ENCODE measurements at regions of chr18 and their contacts with region 1.

Region 1: GRCh38 chr18:72762515-72763122 is 105.2 kb downstream of the NETO1 start:
- DNase-seq: peak; percentile 30
- ATAC-seq: no peak
- H3K4me3 ChIP-seq: no peak overlapping the region
- H3K27ac ChIP-seq: no peak overlapping the region
- H3K4me1 ChIP-seq: no peaks in the 10 kb centered on the region
- H3K27me3 ChIP-seq: no peaks in the 10 kb centered on the region
- CTCF ChIP-seq: peak; percentile 52; the same call in 1 of the 2 replicates

Region 2: GRCh38 chr18:70998490-70998889 is 1764.1 kb before region 1 on chr18:
- CTCF ChIA-PET with region 1: no interaction called
- POLR2A ChIA-PET with region 1: no interaction called
- in situ Hi-C with region 1: no loop called
- intact Hi-C with region 1: no loop called
- DNase-seq: no peak
- ATAC-seq: no peak
- H3K4me3 ChIP-seq: no peak overlapping the region
- H3K27ac ChIP-seq: no peak overlapping the region
- H3K4me1 ChIP-seq: no peaks in the 10 kb centered on the region
- H3K27me3 ChIP-seq: no peaks in the 10 kb centered on the region
- CTCF ChIP-seq: peak; percentile 21; the same call in 1 of the 2 replicates

Region 3: GRCh38 chr18:72846736-72847533 is 84.3 kb after region 1 on chr18:
- CTCF ChIA-PET with region 1: no interaction called
- POLR2A ChIA-PET with region 1: no interaction called
- in situ Hi-C with region 1: no loop called
- intact Hi-C with region 1: no loop called
- DNase-seq: no peak
- ATAC-seq: no peak
- H3K4me3 ChIP-seq: no peak overlapping the region
- H3K27ac ChIP-seq: no peak overlapping the region
- H3K4me1 ChIP-seq: no peaks in the 10 kb centered on the region
- H3K27me3 ChIP-seq: no peaks in the 10 kb centered on the region
- CTCF ChIP-seq: no peak

Region 4: GRCh38 chr18:72948439-72948838 is 185.8 kb after region 1 on chr18:
- CTCF ChIA-PET with region 1: no interaction called
- POLR2A ChIA-PET with region 1: no interaction called
- in situ Hi-C with region 1: no loop called
- intact Hi-C with region 1: no loop called
- DNase-seq: no peak
- ATAC-seq: no peak
- H3K4me3 ChIP-seq: no peak overlapping the region
- H3K27ac ChIP-seq: no peak overlapping the region
- H3K4me1 ChIP-seq: no peaks in the 10 kb centered on the region
- H3K27me3 ChIP-seq: no peaks in the 10 kb centered on the region
- CTCF ChIP-seq: no peak

Region 5: GRCh38 chr18:73136134-73136533 is 373.5 kb after region 1 on chr18:
- CTCF ChIA-PET with region 1: no interaction called
- POLR2A ChIA-PET with region 1: no interaction called
- in situ Hi-C with region 1: no loop called
- intact Hi-C with region 1: loop called (anchors 2 kb)
- DNase-seq: no peak
- ATAC-seq: no peak
- H3K4me3 ChIP-seq: no peak overlapping the region
- H3K27ac ChIP-seq: no peak overlapping the region
- H3K4me1 ChIP-seq: no peaks in the 10 kb centered on the region
- H3K27me3 ChIP-seq: no peaks in the 10 kb centered on the region
- CTCF ChIP-seq: no peak; the same call in 1 of the 2 replicates

Region 6: DNA sequence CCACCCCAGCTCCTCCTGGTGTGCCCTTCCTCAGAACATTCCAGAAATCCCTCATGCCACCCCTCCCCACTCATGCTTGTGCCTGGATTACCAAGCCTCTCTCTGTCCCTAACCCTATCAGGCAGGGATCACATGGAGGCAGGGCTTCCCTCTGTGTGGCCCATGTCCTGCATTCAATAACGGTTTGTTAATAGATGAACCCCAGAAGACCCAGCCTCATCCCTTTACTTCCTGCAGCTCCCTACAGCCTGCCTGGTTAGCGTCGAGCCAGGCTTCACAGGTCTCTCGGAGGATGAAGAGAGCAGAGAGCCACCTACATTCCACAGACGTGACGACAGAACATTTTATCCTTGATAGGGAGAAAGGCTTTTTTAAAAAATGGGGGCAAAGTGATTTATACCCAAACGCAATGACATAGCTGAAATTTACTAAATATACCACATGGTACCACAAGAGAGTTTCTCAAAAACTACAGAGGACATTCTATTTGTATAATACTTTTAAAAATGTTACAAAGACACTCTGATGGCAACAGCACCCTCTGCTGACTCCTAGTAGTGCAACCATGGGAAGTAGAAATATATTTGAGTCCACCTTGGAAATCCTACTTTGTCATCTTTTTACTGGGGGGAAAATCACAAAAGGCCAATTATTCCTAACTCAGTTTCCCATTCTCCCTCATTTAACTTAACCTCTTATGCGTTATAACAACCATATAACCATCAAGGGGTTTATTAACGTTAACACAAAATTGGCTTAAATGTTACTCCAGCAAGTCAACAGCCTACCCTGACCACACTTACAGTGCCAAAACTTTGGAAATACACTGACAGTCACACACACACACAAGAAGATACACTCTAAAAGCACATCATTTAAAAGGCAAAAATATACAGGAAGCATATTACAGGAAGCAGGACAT is 1354.3 kb after region 1 on chr18:
- CTCF ChIA-PET with region 1: no interaction called
- POLR2A ChIA-PET with region 1: no interaction called
- in situ Hi-C with region 1: no loop called
- intact Hi-C with region 1: loop called (anchors 10 kb)
- DNase-seq: peak; percentile 18
- ATAC-seq: peak; percentile 80; the same call in 1 of the 2 replicates
- H3K4me3 ChIP-seq: no peak overlapping the region
- H3K27ac ChIP-seq: no peak overlapping the region
- H3K4me1 ChIP-seq: no peaks in the 10 kb centered on the region
- H3K27me3 ChIP-seq: peaks cover 13% of the 10 kb centered on the region; the same call in 1 of the 2 replicates
- CTCF ChIP-seq: peak; percentile 86